Colonic mucosa (tissue), 4 donors: ENCODE measurements at regions of chr10 and their contacts with region 1.

Region 1: DNA sequence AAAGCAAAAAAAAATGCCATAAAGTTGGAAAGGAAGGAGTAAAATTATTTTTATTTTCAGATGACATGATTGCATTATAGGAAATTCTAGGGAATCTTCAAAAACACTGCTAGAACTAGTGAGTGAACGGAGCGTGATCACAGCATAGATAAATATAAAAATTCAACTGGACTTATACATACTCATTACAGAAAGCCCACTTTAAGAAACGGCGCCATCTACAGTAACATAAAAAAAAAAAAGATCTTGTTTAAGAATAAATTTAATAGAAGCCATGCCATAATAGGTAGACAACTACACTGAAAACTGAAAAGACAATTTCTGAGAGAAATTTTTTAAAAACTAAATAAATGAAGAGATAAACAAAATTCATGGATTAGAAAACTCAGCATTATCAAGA is 623.1 kb upstream of the MGMT start:
- DNase-seq: no peak
- H3K4me3 ChIP-seq: no peak overlapping the region
- H3K27ac ChIP-seq: no peak overlapping the region
- H3K4me1 ChIP-seq: no peaks in the 10 kb centered on the region
- H3K27me3 ChIP-seq: no peaks in the 10 kb centered on the region
- CTCF ChIP-seq: no peak

Region 2: GRCh38 chr10:128631801-128632241 is 212.2 kb before region 1 on chr10:
- intact Hi-C with region 1: loop called (anchors 5 kb)
- DNase-seq: no peak
- H3K4me3 ChIP-seq: no peak overlapping the region
- H3K27ac ChIP-seq: no peak overlapping the region
- H3K4me1 ChIP-seq: no peaks in the 10 kb centered on the region
- H3K27me3 ChIP-seq: no peaks in the 10 kb centered on the region
- CTCF ChIP-seq: peak; percentile 35